HepG2 (cell line): ENCODE measurements at regions of chr5 and their contacts with region 1.

Region 1: GRCh38 chr5:61933787-61934626 is 372.0 kb upstream of the KIF2A start:
- DNase-seq: peak; percentile 44
- ATAC-seq: peak; percentile 87
- H3K4me3 ChIP-seq: no peak overlapping the region
- H3K27ac ChIP-seq: no peak overlapping the region
- H3K4me1 ChIP-seq: no peaks in the 10 kb centered on the region
- H3K27me3 ChIP-seq: no peaks in the 10 kb centered on the region
- CTCF ChIP-seq: peak; percentile 72
- EP300 ChIP-seq: no peak
- POLR2A ChIP-seq: no peak
- RAD21 ChIP-seq: peak; percentile 69

Region 2: DNA sequence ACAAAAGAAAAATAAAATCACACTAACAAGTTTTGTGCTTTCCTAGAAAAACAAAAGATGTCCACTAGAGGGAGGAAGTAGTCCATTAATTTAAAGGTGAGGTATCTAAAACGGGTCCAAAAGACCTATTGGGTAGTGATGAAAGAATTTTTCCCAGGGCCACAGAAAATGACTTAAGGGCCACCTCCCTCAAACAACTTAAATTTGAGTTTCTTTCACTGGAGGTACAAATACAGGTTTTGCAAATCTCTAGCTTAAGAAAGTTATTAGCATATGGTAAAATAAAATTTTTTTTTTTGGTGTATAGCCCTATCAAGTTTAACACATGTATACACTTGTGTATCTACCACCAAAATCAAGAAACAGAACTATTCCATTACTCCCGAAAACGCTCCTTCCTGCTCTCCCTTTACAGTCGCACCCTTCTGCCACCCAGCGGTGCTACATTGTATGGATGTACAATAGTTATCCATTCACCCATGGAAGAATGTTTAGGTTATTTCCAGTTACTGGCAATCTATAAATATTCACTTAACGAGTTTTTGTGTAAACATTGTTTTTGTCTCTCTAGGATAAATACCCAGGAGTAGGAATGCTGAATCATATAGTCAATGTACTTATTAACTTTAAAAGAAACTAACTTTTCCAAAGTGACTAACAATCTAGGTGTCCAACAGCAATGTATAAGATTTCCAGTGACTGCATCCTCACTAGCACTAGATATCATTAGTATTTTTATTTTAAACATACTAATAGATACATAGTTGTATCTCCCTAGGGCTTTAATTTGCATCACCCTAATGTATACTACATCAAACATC is 1256.0 kb before region 1 on chr5:
- CTCF ChIA-PET with region 1: no interaction called
- POLR2A ChIA-PET with region 1: no interaction called
- in situ Hi-C with region 1: no loop called
- intact Hi-C with region 1: loop called (anchors 10 kb)
- DNase-seq: peak; percentile 64
- ATAC-seq: peak; percentile 81
- H3K4me3 ChIP-seq: peak overlapping the region in 1 of 3 experiments; percentile 17; a peak in 1 of 6 replicates
- H3K27ac ChIP-seq: peak overlapping the region; percentile 57
- H3K4me1 ChIP-seq: peaks cover 65% of the 10 kb centered on the region
- H3K27me3 ChIP-seq: no peaks in the 10 kb centered on the region
- CTCF ChIP-seq: peak; percentile 46
- EP300 ChIP-seq: peak in 1 of 2 experiments; percentile 41; a peak in 1 of 4 replicates
- POLR2A ChIP-seq: no peak
- RAD21 ChIP-seq: 0 out of 2 replicates have a peak, but pooled peaks have one; percentile 17

Region 3: GRCh38 chr5:60960591-60960990 is 973.4 kb before region 1 on chr5:
- CTCF ChIA-PET with region 1: interaction called, 3 read pairs
- POLR2A ChIA-PET with region 1: no interaction called
- in situ Hi-C with region 1: loop called (anchors 25 kb)
- intact Hi-C with region 1: loop called (anchors 10 kb)
- DNase-seq: no peak
- ATAC-seq: no peak
- H3K4me3 ChIP-seq: no peak overlapping the region
- H3K27ac ChIP-seq: no peak overlapping the region
- H3K4me1 ChIP-seq: no peaks in the 10 kb centered on the region
- H3K27me3 ChIP-seq: no peaks in the 10 kb centered on the region
- CTCF ChIP-seq: 0 out of 2 replicates have a peak, but pooled peaks have one; percentile 18
- EP300 ChIP-seq: no peak
- POLR2A ChIP-seq: no peak
- RAD21 ChIP-seq: no peak

Region 4: GRCh38 chr5:61171479-61171878 is 762.5 kb before region 1 on chr5:
- CTCF ChIA-PET with region 1: no interaction called
- POLR2A ChIA-PET with region 1: no interaction called
- in situ Hi-C with region 1: no loop called
- intact Hi-C with region 1: loop called (anchors 5 kb)
- DNase-seq: no peak
- ATAC-seq: no peak
- H3K4me3 ChIP-seq: no peak overlapping the region
- H3K27ac ChIP-seq: no peak overlapping the region
- H3K4me1 ChIP-seq: no peaks in the 10 kb centered on the region
- H3K27me3 ChIP-seq: no peaks in the 10 kb centered on the region
- CTCF ChIP-seq: no peak
- EP300 ChIP-seq: no peak
- POLR2A ChIP-seq: no peak
- RAD21 ChIP-seq: no peak

Region 5: DNA sequence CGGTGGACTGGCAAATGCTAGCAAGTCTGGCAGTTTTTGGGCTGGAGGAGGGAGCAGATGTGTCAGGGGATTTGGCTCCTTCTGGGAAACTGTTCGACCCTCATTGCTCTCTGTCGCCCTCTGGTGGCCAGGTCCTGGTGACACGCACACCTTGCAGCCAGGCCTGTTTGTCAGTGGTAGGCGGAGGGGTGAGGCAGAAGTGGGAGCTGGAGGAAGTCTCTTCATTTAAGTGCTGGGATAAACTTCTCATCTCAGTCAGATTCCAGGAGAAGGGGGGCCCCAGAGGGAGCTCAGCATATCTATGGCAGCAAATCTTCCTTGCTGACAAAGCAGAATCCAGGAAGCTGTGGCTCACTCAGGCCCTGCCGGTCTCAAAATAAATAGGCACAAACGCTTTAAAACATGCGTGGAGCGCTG is 275.4 kb before region 1 on chr5:
- CTCF ChIA-PET with region 1: no interaction called
- POLR2A ChIA-PET with region 1: no interaction called
- in situ Hi-C with region 1: no loop called
- intact Hi-C with region 1: loop called (anchors 5 kb)
- DNase-seq: peak; percentile 44
- ATAC-seq: peak; percentile 96
- H3K4me3 ChIP-seq: no peak overlapping the region
- H3K27ac ChIP-seq: no peak overlapping the region
- H3K4me1 ChIP-seq: no peaks in the 10 kb centered on the region
- H3K27me3 ChIP-seq: peaks cover 2 to 29% of the 10 kb centered on the region in 2 experiments; a peak in 2 of 5 replicates
- CTCF ChIP-seq: peak; percentile 91
- EP300 ChIP-seq: no peak
- POLR2A ChIP-seq: no peak
- RAD21 ChIP-seq: no peak

Region 6: DNA sequence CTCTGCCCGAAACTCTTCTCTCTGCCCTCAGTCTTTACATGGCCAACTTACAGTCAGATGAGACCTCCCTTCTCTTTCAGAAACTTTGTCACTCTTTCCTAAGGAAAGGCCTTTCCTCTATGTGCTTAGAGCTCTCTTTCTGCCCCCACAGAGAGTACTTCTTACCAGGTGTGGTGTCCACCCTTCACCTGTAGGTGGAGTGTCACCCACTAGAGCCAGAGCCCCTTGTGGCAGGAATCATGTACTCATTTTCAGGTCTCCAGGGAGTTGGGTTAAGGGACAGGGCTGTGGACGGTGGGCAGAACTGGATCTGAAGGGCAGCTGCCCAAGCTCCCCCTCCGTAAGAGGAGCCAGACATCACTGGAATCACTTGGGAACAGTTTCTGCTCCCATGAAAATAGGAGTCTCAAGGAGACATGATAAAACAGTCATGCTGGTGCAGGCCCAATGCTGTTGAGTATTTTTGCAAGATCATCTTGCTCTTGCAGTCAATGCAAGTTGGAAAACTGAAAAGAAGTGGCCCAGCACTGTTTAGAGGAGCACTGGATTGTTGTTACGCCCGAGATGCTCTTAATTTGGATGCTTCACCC is 165.2 kb before region 1 on chr5:
- CTCF ChIA-PET with region 1: no interaction called
- POLR2A ChIA-PET with region 1: no interaction called
- in situ Hi-C with region 1: no loop called
- intact Hi-C with region 1: loop called (anchors 5 kb)
- DNase-seq: peak; percentile 70
- ATAC-seq: peak; percentile 100
- H3K4me3 ChIP-seq: no peak overlapping the region
- H3K27ac ChIP-seq: no peak overlapping the region
- H3K4me1 ChIP-seq: no peaks in the 10 kb centered on the region
- H3K27me3 ChIP-seq: no peaks in the 10 kb centered on the region; a peak in 1 of 5 replicates
- CTCF ChIP-seq: peak; percentile 72
- EP300 ChIP-seq: no peak
- POLR2A ChIP-seq: no peak
- RAD21 ChIP-seq: peak; percentile 48; the same call in 1 of the 2 replicates

Region 7: DNA sequence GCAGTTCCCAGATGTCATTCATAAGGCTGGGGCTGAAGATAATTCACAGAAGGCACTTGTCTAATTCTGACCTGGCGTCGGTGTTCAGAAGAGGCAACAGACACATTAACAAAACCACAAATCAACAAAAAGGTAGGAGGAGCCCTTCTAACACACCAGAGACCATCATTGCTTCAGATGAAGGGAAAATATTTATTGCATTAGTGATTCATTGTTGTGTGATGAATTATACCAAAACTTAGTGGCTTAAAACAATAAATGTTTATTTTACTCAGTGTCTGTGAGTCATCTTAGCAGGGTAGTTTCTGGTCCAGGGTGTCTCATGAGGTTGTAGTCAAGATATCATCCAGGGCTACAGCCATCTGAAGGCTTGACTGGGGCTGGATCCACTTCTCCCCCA is 280.7 kb after region 1 on chr5:
- CTCF ChIA-PET with region 1: no interaction called
- POLR2A ChIA-PET with region 1: no interaction called
- in situ Hi-C with region 1: no loop called
- intact Hi-C with region 1: no loop called
- DNase-seq: no peak
- ATAC-seq: no peak
- H3K4me3 ChIP-seq: no peak overlapping the region
- H3K27ac ChIP-seq: no peak overlapping the region
- H3K4me1 ChIP-seq: no peaks in the 10 kb centered on the region
- H3K27me3 ChIP-seq: no peaks in the 10 kb centered on the region
- CTCF ChIP-seq: no peak
- EP300 ChIP-seq: no peak
- POLR2A ChIP-seq: no peak
- RAD21 ChIP-seq: no peak